Mammary epithelial cell (primary cell): ENCODE measurements at regions of chr22 and their contacts with region 1.

Region 1: GRCh38 chr22:30326706-30327362 is at the start of gene TBC1D10A:
- DNase-seq: peak; percentile 93
- H3K4me3 ChIP-seq: peak within 1 kb of the TSS; percentile 86 to 95 (median 89)
- H3K27ac ChIP-seq: peak within 1 kb of the TSS; percentile 67
- H3K4me1 ChIP-seq: peaks cover 31% of the 10 kb centered on the region
- H3K27me3 ChIP-seq: no peaks in the 10 kb centered on the region
- CTCF ChIP-seq: no peak
- total RNA-seq, gene TBC1D10A: 25.7 to 27.5 TPM

Region 2: DNA sequence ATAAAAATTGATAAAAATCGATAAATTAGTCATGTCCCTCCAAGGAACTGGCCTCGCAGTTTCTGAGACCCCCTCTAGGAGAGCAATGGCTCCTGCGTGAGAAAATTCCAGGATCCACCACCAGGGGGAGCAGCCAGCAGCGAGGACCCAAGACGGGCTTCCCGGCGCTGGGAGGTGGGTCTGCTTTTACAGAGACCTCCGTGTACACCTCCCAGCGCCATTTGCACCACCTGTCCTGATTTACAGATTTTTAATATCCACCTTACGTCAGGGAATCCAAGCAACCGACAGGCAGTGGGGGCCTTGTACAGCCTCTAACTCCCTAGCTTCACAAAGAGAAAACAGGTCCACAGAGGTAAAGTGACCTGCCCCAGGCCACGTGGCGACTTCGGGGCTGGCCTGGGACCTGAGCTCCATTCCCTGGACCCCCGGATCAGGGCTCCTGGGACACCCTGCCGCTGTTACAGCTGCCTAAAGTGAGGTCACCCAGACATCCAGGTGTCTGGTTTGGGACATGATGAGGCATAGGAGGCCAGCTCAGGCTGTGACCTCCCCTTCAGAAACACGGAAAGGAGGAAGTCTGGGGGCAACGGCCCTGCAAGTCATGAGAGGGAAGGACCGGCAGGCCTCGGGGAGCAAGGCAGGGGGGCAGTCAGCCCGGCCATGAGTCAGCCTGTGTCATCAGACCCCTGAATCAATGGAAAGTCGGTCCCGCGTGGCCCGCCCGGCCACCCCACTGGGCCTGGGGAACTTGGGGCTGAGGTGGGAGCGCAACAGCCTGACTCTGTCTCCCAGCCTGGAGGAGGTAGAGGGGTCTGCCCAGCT is 63.7 kb before region 1 on chr22:
- CTCF ChIA-PET with region 1: no interaction called
- dilution Hi-C with region 1: no loop called
- in situ Hi-C with region 1: no loop called
- intact Hi-C with region 1: loop called (anchors 1 kb)
- DNase-seq: no peak
- H3K4me3 ChIP-seq: no peak overlapping the region
- H3K27ac ChIP-seq: peak overlapping the region; percentile 62
- H3K4me1 ChIP-seq: peaks cover 15% of the 10 kb centered on the region
- H3K27me3 ChIP-seq: no peaks in the 10 kb centered on the region
- CTCF ChIP-seq: peak; percentile 90 to 96

Region 3: GRCh38 chr22:30312053-30312452 is 14.8 kb before region 1 on chr22:
- CTCF ChIA-PET with region 1: no interaction called
- dilution Hi-C with region 1: no loop called
- in situ Hi-C with region 1: no loop called
- intact Hi-C with region 1: loop called (anchors 1 kb)
- DNase-seq: peak; percentile 98
- H3K4me3 ChIP-seq: no peak overlapping the region
- H3K27ac ChIP-seq: peak overlapping the region; percentile 58
- H3K4me1 ChIP-seq: peaks cover 76% of the 10 kb centered on the region
- H3K27me3 ChIP-seq: no peaks in the 10 kb centered on the region
- CTCF ChIP-seq: no peak

Region 4: GRCh38 chr22:30356449-30357235 is 29.8 kb after region 1 on chr22 and contains the starts of genes CCDC157 and SF3A1:
- CTCF ChIA-PET with region 1: no interaction called
- dilution Hi-C with region 1: no loop called
- in situ Hi-C with region 1: no loop called
- intact Hi-C with region 1: loop called (anchors 1 kb)
- DNase-seq: peak; percentile 91
- H3K4me3 ChIP-seq: peak within 1 kb of the TSS; percentile 75 to 89 (median 85)
- H3K27ac ChIP-seq: peak within 1 kb of the TSS; percentile 85
- H3K4me1 ChIP-seq: peaks cover 15% of the 10 kb centered on the region
- H3K27me3 ChIP-seq: no peaks in the 10 kb centered on the region
- CTCF ChIP-seq: no peak
- total RNA-seq, gene CCDC157: 1.9 to 3.2 TPM
- total RNA-seq, gene SF3A1: 45.0 to 163 TPM